Panc1 (cell line): ENCODE measurements at regions of chr1 and their contacts with region 1.

Region 1: DNA sequence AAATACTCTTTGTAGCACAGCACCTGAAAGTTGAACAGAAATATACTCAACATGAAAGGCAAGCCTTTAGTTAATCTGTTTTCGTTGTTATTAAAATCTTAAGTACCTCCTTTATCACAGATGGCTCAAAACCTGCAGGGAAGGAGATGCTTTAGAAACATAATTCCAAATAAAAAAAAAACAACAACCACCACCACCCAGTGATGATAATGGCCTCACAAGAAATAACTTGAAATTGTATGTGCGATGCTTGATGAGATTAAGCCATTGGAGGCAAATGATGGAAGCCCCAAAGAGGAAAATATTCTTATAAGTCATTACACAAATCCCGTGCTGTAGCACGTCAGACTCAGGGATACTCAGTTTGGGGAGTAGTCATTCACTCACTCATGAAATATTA is 24.9 kb upstream of the ZBTB40 start:
- DNase-seq: no peak
- ATAC-seq: no peak
- H3K4me3 ChIP-seq: no peak overlapping the region
- H3K27ac ChIP-seq: no peak overlapping the region
- H3K4me1 ChIP-seq: no peaks in the 10 kb centered on the region
- H3K27me3 ChIP-seq: no peaks in the 10 kb centered on the region; the same call in 1 of the 2 replicates
- CTCF ChIP-seq: no peak

Region 2: GRCh38 chr1:21439721-21440629 is 986.8 kb before region 1 on chr1 and contains the start of gene NBPF3:
- CTCF ChIA-PET with region 1: no interaction called
- POLR2A ChIA-PET with region 1: interaction called, 12 read pairs
- in situ Hi-C with region 1: no loop called
- intact Hi-C with region 1: no loop called
- DNase-seq: peak; percentile 67
- ATAC-seq: peak; percentile 95
- H3K4me3 ChIP-seq: peak within 1 kb of the TSS; percentile 57 to 74
- H3K27ac ChIP-seq: peak within 1 kb of the TSS; percentile 59
- H3K4me1 ChIP-seq: peaks cover 9% of the 10 kb centered on the region
- H3K27me3 ChIP-seq: no peaks in the 10 kb centered on the region
- CTCF ChIP-seq: no peak
- total RNA-seq, gene NBPF3: 15.9 TPM

Region 3: DNA sequence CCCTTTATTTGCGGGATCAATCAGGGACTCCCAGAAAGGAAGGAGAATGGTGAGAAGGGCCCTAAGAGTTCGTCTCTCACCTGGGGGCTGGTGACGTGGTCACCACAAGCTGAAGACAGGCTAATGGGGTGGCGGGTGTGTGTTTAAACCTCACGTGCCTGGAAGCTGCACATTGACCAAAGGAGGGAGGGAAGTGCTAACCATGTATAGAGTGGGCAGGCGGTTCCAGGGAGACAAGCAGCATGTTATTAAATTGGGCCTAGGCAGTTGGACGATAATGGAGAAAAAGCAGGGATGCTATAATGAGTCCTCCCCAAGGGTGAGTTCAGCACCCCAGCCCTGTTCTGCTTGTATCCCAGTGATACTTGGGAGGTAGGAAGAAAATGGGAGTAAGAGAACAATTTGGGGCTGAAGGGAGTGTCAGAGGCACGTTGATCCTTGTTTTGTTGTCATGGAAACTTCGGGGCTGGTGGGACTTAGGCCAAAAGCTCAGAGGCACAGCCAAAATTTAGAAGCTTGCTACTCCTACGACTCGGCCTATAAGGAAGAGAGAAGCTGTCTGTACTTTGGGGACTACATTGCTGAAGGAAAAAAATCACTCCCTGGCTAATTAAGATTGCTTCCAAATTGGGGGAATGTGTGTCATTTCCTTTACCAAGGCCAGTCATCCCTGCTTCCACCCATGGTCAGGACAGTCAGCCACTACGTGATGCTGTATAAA is 103.3 kb after region 1 on chr1:
- CTCF ChIA-PET with region 1: no interaction called
- POLR2A ChIA-PET with region 1: no interaction called
- in situ Hi-C with region 1: no loop called
- intact Hi-C with region 1: no loop called
- DNase-seq: no peak
- ATAC-seq: no peak
- H3K4me3 ChIP-seq: no peak overlapping the region
- H3K27ac ChIP-seq: no peak overlapping the region
- H3K4me1 ChIP-seq: no peaks in the 10 kb centered on the region
- H3K27me3 ChIP-seq: no peaks in the 10 kb centered on the region
- CTCF ChIP-seq: no peak